ENCODE measurements at regions of chr20 and their contacts with region 1.

Region 1: DNA sequence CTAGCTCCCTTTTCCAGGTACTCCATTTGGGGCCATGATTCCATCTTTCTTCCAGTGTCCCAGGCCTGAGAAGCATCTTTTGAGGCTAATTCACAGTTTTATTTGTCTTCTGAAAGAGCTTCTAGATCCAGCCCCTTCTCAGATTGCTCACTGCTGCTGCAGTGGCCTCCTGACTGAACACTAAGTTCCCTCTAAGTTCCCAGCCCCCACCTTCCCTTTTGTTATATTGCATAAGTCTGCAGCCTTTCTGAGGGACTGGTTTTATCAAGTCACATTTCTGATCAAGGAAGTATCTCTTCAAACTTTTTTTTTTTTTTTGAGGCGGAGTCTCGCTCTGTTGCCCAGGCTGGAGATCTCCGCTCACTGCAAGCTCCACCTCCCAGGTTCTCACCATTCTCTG is 10.7 kb downstream of the MAPRE1 start:
- DNase-seq: peak in 3 of 14 experiments; percentile 18 to 61 (median 54)
- ATAC-seq: peak; percentile 44
- H3K4me3 ChIP-seq: no peak overlapping the region
- H3K4me3 Mint-ChIP-seq: peak overlapping the region; percentile 59
- H3K27ac ChIP-seq: peak overlapping the region in 1 of 2 donors; percentile 36
- H3K27ac Mint-ChIP-seq: peak overlapping the region; percentile 77
- H3K4me1 ChIP-seq: peaks cover 34% of the 10 kb centered on the region
- H3K4me1 Mint-ChIP-seq: peaks cover 68% of the 10 kb centered on the region
- H3K27me3 ChIP-seq: no peaks in the 10 kb centered on the region
- H3K27me3 Mint-ChIP-seq: no peaks in the 10 kb centered on the region
- CTCF ChIP-seq: no peak

Region 2: DNA sequence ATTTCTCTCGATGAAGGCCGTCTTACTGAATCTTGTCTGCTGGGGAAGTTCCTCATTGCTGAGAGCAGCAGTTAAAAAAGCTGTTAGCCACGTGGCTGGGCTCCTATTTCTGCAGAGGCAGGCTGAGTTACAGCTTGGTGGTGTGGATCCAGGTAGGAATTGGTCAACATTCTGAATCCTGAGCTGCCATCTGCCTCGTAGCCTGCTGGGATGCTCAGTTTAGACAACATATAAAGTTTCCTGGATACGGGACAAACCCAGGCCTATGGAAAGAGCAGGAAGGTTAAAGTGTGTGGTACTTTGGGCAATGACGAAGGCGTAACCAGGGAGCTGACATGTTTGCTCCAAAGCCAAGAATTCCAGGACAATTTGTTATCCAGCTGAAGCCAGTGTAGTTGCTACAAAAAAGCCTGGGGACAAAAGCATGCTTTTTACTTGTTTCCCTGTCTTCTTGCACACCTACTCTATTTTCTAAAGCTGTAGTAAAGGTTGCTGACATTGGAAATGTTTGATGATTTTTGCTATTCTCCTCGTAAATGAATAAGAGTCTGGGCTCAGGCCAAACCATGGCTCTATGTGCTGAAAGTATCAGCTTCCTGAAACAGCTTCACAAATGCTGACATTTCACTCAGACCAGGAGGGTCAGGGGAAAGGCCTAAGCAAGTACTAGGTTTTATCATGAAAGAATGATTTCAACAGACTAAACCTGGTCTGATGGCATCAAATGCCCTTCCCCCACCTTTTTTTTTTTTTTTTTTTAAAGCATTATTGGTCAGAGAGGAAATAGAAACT is 1023.7 kb before region 1 on chr20:
- CTCF ChIA-PET with region 1: no interaction called
- POLR2A ChIA-PET with region 1: no interaction called
- intact Hi-C with region 1: no loop called
- DNase-seq: no peak
- ATAC-seq: no peak
- H3K4me3 ChIP-seq: no peak overlapping the region
- H3K4me3 Mint-ChIP-seq: no peak overlapping the region
- H3K27ac ChIP-seq: no peak overlapping the region
- H3K27ac Mint-ChIP-seq: no peak overlapping the region
- H3K4me1 ChIP-seq: peaks cover 5% of the 10 kb centered on the region
- H3K4me1 Mint-ChIP-seq: peaks cover 18% of the 10 kb centered on the region
- H3K27me3 ChIP-seq: no peaks in the 10 kb centered on the region
- H3K27me3 Mint-ChIP-seq: no peaks in the 10 kb centered on the region
- CTCF ChIP-seq: no peak

Region 3: DNA sequence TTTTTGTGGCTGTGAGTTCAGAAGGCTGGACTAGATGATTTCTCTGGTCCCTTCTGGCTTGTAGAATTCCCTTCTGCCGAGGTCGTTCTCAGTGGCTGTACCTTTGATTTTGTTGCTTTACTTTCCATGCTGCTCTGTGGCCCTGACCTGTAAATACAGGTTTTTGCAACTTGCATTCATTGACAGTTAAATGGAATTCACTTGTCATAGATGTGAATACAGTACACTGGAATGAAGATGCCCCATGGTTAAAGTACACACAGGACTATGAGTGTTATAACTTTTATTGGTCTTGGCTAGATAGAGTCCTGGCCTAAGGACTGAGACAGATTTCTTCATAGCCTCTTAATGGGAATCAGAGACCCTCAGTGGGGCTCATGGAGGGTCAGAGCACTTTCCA is 15.3 kb after region 1 on chr20:
- CTCF ChIA-PET with region 1: no interaction called
- POLR2A ChIA-PET with region 1: interaction called, 3 read pairs
- intact Hi-C with region 1: loop called in 1 of 2 experiments (anchors 2 kb)
- DNase-seq: no peak
- ATAC-seq: no peak
- H3K4me3 ChIP-seq: no peak overlapping the region
- H3K4me3 Mint-ChIP-seq: no peak overlapping the region
- H3K27ac ChIP-seq: no peak overlapping the region
- H3K27ac Mint-ChIP-seq: no peak overlapping the region
- H3K4me1 ChIP-seq: peaks cover 13% of the 10 kb centered on the region
- H3K4me1 Mint-ChIP-seq: peaks cover 66% of the 10 kb centered on the region
- H3K27me3 ChIP-seq: no peaks in the 10 kb centered on the region
- H3K27me3 Mint-ChIP-seq: no peaks in the 10 kb centered on the region
- CTCF ChIP-seq: no peak

Measured in CD4-positive, alpha-beta T cell (primary cell).